ENCODE measurements at regions of chr17 and their contacts with region 1.

Region 1: GRCh38 chr17:75764711-75765421 is at the start of gene GALK1:
- DNase-seq: peak in 9 of 10 donors; percentile 55 to 83 (median 62)
- H3K4me3 ChIP-seq: peak within 1 kb of the TSS; percentile 55 to 99 (median 80)
- H3K27ac ChIP-seq: peak within 1 kb of the TSS; percentile 41 to 97 (median 92)
- H3K27me3 ChIP-seq: no peaks in the 10 kb centered on the region
- CTCF ChIP-seq: peak in 48 of 56 donors; percentile 21 to 73 (median 48)
- total RNA-seq, gene GALK1: 6.0 to 32.0 (median 16.1) TPM

Region 2: GRCh38 chr17:75632863-75633485 is 131.9 kb before region 1 on chr17 and contains the start of gene SMIM5:
- intact Hi-C with region 1: no loop called
- DNase-seq: peak; percentile 94 to 99 (median 96)
- H3K4me3 ChIP-seq: peak within 1 kb of the TSS; percentile 20 to 73 (median 54)
- H3K27ac ChIP-seq: peak within 1 kb of the TSS; percentile 40 to 100 (median 98)
- H3K27me3 ChIP-seq: no peaks in the 10 kb centered on the region
- CTCF ChIP-seq: peak; percentile 94 to 100 (median 98)
- total RNA-seq, gene SMIM5: 0.95 to 34.0 (median 5.6) TPM

Region 3: GRCh38 chr17:75845049-75845860 is 80.4 kb after region 1 on chr17:
- intact Hi-C with region 1: loop called in 1 of 2 experiments (anchors 5 kb)
- DNase-seq: peak in 7 of 10 donors; percentile 15 to 71 (median 50)
- H3K4me3 ChIP-seq: peak overlapping the region in 3 of 59 donors; percentile 2 to 12 (median 10)
- H3K27ac ChIP-seq: peak overlapping the region in 56 of 59 donors; percentile 4 to 100 (median 68)
- H3K27me3 ChIP-seq: no peaks in the 10 kb centered on the region
- CTCF ChIP-seq: peak; percentile 26 to 75 (median 58)